ENCODE measurements at regions of chr4 and their contacts with region 1.

Region 1: GRCh38 chr4:146342600-146343192 is 128.4 kb downstream of the REELD1 start:
- DNase-seq: no peak
- H3K4me3 ChIP-seq: no peak overlapping the region
- H3K27ac ChIP-seq: no peak overlapping the region
- H3K4me1 ChIP-seq: no peaks in the 10 kb centered on the region
- H3K27me3 ChIP-seq: no peaks in the 10 kb centered on the region
- CTCF ChIP-seq: peak; percentile 51 to 58 (median 57)
- EP300 ChIP-seq: no peak
- POLR2A ChIP-seq: no peak

Region 2: DNA sequence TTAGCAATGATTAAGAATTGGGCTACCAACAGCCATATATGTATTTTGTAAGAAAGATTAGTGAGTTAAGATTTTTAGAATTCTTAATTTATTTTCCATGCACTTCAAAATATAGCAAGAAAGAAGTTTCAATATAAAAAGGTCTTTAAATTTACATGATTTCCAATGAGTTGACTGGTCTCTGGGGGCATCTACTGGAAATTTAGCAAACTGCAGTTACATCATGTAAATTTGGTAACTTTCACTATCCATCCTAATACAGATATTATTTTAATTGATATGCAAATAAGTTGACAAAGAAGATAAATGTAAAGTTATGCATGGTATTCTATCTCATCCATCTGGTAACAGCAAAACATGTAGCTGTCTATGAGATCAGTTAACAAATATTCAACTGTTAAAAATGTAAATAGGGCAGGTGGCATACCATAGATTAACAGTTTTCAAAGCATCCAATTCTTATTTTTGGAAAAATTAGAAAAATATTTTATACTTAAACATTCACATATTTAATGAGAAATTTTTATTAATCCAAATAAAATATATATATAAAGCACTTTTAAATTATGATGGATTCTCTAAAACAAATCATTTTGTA is 573.9 kb after region 1 on chr4:
- intact Hi-C with region 1: loop called (anchors 10 kb)
- DNase-seq: no peak
- H3K4me3 ChIP-seq: no peak overlapping the region
- H3K27ac ChIP-seq: no peak overlapping the region
- H3K4me1 ChIP-seq: no peaks in the 10 kb centered on the region
- H3K27me3 ChIP-seq: peaks cover 0 to 5% (median 0%) of the 10 kb centered on the region in 4 donors
- CTCF ChIP-seq: peak; percentile 47 to 60 (median 55)
- EP300 ChIP-seq: no peak
- POLR2A ChIP-seq: no peak

Measured in esophagus muscularis mucosa (tissue), 4 donors.